Activated CD4-positive, alpha-beta T cell treated with anti-CD3 and anti-CD28 coated beads for 36 hours (primary cell): ENCODE measurements at regions of chr2 and their contacts with region 1.

Region 1: DNA sequence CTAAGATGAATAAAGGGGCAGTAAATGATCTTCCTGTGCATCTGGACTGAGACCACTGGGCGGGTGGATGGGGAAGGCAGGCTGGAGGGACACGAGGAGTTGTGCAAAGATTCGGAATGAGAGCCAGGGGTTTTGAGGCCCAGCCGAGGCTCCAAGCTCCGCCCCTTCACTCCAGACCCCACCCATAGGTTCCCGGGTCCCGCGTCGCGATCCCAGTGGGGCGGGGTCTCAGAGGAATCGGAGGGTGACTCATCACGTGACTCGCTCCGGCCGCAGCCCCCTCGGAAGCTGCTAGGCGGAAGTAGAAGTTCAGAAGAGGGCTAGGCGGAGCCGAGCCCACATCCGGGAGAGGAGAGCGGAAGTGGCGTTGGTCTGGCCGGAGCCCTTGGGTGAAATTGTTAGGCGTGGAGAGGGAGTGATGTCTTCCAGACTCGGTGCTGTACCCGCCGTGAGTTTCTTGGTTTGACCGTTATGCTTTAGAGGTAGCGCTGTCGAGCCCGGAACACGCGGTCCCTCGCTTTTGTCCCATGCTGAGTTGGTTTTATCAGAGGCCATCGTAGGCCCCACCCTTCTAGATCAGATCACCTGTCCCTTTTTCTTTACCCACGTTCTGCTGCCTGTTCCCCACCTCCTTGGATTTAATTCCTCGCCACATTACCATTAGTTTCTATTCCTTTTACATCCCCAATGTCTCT is at the start of gene ZNF512:
- DNase-seq: peak; percentile 91
- ATAC-seq: peak; percentile 92
- H3K4me3 Mint-ChIP-seq: peak within 1 kb of the TSS; percentile 98
- H3K27ac Mint-ChIP-seq: peak within 1 kb of the TSS; percentile 98
- H3K4me1 Mint-ChIP-seq: peaks cover 47% of the 10 kb centered on the region
- H3K27me3 Mint-ChIP-seq: no peaks in the 10 kb centered on the region
- total RNA-seq, gene ZNF512: 31.8 to 34.5 TPM

Region 2: GRCh38 chr2:27249891-27250651 is 332.8 kb before region 1 on chr2:
- CTCF ChIA-PET with region 1: no interaction called
- POLR2A ChIA-PET with region 1: no interaction called
- intact Hi-C with region 1: no loop called
- DNase-seq: peak; percentile 83
- ATAC-seq: peak; percentile 93
- H3K4me3 Mint-ChIP-seq: no peak overlapping the region
- H3K27ac Mint-ChIP-seq: no peak overlapping the region
- H3K4me1 Mint-ChIP-seq: peaks cover 2% of the 10 kb centered on the region
- H3K27me3 Mint-ChIP-seq: peaks cover 4% of the 10 kb centered on the region

Region 3: GRCh38 chr2:27322766-27323595 is 259.9 kb before region 1 on chr2 and contains the start of gene MPV17:
- CTCF ChIA-PET with region 1: no interaction called
- POLR2A ChIA-PET with region 1: no interaction called
- intact Hi-C with region 1: loop called in 1 of 2 experiments (anchors 1 kb)
- DNase-seq: peak; percentile 94
- ATAC-seq: peak; percentile 99
- H3K4me3 Mint-ChIP-seq: peak within 1 kb of the TSS; percentile 98
- H3K27ac Mint-ChIP-seq: peak within 1 kb of the TSS; percentile 98
- H3K4me1 Mint-ChIP-seq: peaks cover 17% of the 10 kb centered on the region
- H3K27me3 Mint-ChIP-seq: no peaks in the 10 kb centered on the region
- total RNA-seq, gene MPV17: 93.4 to 103 TPM

Region 4: DNA sequence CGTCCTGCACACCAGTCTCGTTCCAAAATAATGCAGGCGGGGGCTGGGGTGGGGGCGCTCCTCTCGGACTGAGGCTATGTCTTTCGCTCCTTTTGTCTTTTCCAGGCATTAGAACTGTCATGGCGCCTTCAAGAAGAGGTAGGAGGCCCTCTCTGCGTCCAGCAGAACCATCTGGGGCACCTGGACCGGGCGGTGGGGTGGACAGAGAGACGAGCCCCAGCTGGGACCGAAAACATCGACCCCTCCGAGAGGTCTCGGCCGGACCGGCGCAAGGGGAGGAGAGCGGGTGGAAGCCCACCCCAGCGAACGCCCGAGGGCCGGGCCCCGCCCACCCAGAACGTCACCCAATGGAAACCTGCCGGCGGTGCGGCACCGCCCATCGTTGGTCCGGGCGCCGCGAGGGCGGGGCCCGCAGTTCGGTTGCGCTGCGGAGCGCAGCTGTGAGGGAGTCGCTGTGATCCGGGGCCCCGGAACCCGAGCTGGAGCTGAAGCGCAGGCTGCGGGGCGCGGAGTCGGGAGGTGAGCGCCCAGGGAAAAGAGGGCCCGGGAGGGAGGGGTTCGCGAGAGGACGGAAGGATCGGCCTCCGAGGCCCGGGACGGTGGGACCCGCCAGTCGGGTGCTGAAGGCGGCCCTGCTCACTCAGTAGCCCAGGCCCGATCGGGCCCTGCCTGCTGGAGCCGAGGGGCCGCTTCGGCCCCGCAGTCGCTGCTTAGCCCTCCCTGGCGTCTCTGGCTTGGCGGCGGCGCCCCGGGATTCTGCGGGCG is 154.4 kb before region 1 on chr2 and contains the start of gene NRBP1:
- CTCF ChIA-PET with region 1: interaction called, 3 read pairs
- POLR2A ChIA-PET with region 1: no interaction called
- intact Hi-C with region 1: loop called in 1 of 2 experiments (anchors 1 kb)
- DNase-seq: peak; percentile 97
- ATAC-seq: peak; percentile 85
- H3K4me3 Mint-ChIP-seq: peak within 1 kb of the TSS; percentile 100
- H3K27ac Mint-ChIP-seq: peak within 1 kb of the TSS; percentile 98
- H3K4me1 Mint-ChIP-seq: peaks cover 37% of the 10 kb centered on the region
- H3K27me3 Mint-ChIP-seq: no peaks in the 10 kb centered on the region
- total RNA-seq, gene NRBP1: 74.3 to 74.4 TPM

Region 5: DNA sequence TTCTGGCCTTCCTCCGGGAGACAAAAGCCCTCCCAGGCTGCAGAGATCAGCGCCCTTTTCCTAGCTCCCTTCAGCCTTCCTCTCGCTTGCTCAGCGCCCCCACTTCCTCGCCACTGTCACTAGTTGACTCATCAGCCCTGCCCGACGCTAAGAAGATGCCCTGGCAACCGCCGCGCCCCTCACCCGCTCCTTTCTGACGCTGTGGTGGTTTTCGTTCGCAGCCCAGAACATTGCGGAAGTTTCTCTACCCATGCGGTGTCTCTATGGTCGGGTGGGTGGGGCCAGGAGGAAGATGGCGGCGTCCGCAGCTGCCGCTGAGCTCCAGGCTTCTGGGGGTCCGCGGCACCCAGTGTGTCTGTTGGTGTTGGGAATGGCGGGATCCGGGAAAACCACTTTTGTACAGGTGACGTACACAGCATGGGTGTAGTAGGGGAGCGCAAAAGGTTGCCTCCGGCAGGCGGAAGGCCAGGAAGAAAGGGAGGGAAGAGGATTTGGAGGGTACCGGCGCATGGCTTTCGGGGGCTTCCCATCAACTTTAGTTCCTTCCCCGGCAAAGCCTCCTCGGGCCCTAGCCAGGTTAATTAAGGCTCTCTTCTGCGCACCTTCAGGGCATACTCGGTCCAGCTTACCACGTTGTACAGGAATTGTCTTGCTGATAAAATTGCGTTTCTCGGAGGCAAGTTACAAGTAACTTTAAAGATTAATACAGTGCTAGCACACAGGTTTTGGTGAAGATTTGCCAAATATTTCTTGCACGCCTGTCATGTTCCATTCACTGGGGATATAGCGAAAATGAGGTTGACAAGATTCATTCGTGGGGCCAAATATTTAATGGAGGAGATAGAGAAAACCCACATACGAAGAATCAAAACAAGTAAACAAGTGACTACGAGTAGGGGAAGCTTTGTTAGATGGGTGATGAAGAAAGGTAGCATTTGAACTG is 46.2 kb after region 1 on chr2 and contains the starts of genes CCDC121 and GPN1:
- CTCF ChIA-PET with region 1: no interaction called
- POLR2A ChIA-PET with region 1: no interaction called
- intact Hi-C with region 1: loop called in 1 of 2 experiments (anchors 1 kb)
- DNase-seq: peak; percentile 98
- ATAC-seq: peak; percentile 96
- H3K4me3 Mint-ChIP-seq: no peak within 1 kb of the TSS
- H3K27ac Mint-ChIP-seq: no peak within 1 kb of the TSS
- H3K4me1 Mint-ChIP-seq: peaks cover 37% of the 10 kb centered on the region
- H3K27me3 Mint-ChIP-seq: no peaks in the 10 kb centered on the region
- total RNA-seq, gene CCDC121: 0.11 to 0.44 TPM
- total RNA-seq, gene GPN1: 45.6 to 63.9 TPM

Region 6: DNA sequence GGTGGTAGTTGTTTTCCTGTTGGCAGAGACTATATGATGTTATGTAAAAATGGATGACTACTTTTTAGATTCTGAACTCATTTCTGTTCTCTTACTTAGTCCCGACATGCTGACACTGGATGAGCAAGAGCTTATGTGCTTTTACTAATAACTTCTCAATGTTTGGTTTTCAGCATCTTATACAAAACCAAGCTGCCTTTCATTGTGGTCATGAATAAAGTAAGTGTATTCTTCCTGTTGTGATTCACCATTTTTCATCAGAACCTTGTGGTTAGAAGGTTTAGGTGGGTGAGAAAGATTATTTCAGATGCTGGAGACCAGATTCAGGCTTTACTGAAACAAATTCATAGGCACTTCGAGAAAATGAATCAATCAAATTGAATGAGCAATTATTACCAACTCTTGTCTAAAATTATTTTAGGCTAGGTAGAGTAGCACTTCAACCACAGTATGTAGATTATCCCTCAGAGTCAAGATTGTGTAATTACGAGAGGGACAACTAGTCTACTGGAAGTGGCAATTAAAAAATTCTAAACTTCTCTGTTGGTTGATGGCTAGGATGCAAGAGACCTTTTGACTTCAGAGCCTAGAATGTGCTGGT is 55.3 kb after region 1 on chr2:
- CTCF ChIA-PET with region 1: no interaction called
- POLR2A ChIA-PET with region 1: no interaction called
- intact Hi-C with region 1: loop called (anchors 2 kb)
- DNase-seq: peak; percentile 31
- ATAC-seq: peak; percentile 88
- H3K4me3 Mint-ChIP-seq: peak overlapping the region; percentile 50
- H3K27ac Mint-ChIP-seq: peak overlapping the region; percentile 95
- H3K4me1 Mint-ChIP-seq: peaks cover 38% of the 10 kb centered on the region
- H3K27me3 Mint-ChIP-seq: no peaks in the 10 kb centered on the region

Region 7: GRCh38 chr2:27663463-27664249 is 80.8 kb after region 1 on chr2 and contains the starts of genes SLC4A1AP and SUPT7L:
- CTCF ChIA-PET with region 1: no interaction called
- POLR2A ChIA-PET with region 1: no interaction called
- intact Hi-C with region 1: loop called in 1 of 2 experiments (anchors 1 kb)
- DNase-seq: peak; percentile 80
- ATAC-seq: peak; percentile 81
- H3K4me3 Mint-ChIP-seq: peak within 1 kb of the TSS; percentile 98
- H3K27ac Mint-ChIP-seq: peak within 1 kb of the TSS; percentile 100
- H3K4me1 Mint-ChIP-seq: peaks cover 42% of the 10 kb centered on the region
- H3K27me3 Mint-ChIP-seq: no peaks in the 10 kb centered on the region
- total RNA-seq, gene SLC4A1AP: 23.8 to 25.3 TPM
- total RNA-seq, gene SUPT7L: 23.7 to 26.1 TPM